ENCODE measurements at regions of chr1 and their contacts with region 1.

Region 1: GRCh38 chr1:203572134-203572625 is 54.5 kb upstream of the ATP2B4 start:
- DNase-seq: no peak
- ATAC-seq: no peak
- H3K4me3 ChIP-seq: no peak overlapping the region
- H3K4me3 Mint-ChIP-seq: no peak overlapping the region
- H3K27ac ChIP-seq: no peak overlapping the region
- H3K27ac Mint-ChIP-seq: no peak overlapping the region
- H3K4me1 ChIP-seq: no peaks in the 10 kb centered on the region
- H3K4me1 Mint-ChIP-seq: no peaks in the 10 kb centered on the region
- H3K27me3 ChIP-seq: peaks cover 0 to 31% of the 10 kb centered on the region in 2 experiments
- H3K27me3 Mint-ChIP-seq: peaks cover 2 to 4% of the 10 kb centered on the region in 2 donors

Region 2: GRCh38 chr1:203465948-203466347 is 106.2 kb before region 1 on chr1:
- CTCF ChIA-PET with region 1: no interaction called
- POLR2A ChIA-PET with region 1: no interaction called
- DNase-seq: no peak
- ATAC-seq: no peak
- H3K4me3 ChIP-seq: no peak overlapping the region
- H3K4me3 Mint-ChIP-seq: no peak overlapping the region
- H3K27ac ChIP-seq: no peak overlapping the region
- H3K27ac Mint-ChIP-seq: no peak overlapping the region
- H3K4me1 ChIP-seq: no peaks in the 10 kb centered on the region
- H3K4me1 Mint-ChIP-seq: peaks cover 0 to 6% (median 0%) of the 10 kb centered on the region in 3 donors
- H3K27me3 ChIP-seq: peaks cover 0 to 54% of the 10 kb centered on the region in 2 experiments
- H3K27me3 Mint-ChIP-seq: peaks cover 28 to 41% of the 10 kb centered on the region in 2 donors

Region 3: DNA sequence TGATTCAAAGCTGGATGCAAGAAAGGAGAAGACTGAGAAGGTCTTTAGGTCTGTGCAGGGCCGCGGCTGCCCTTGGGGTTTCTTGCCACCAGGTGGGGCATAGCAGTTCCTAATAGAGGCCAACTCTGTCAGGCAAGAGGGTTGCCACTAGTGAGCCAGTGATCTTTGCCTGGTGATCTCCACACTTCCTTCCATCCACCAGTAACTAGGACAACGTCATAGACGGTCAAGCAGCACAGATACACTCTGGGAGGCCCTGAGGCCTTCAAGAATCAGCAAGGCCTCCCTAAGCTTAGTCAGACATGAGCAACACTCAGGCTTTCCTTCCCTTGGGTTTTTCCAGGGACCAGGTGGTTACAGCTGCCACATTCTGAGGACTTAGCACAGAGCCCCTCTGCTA is 21.5 kb after region 1 on chr1:
- CTCF ChIA-PET with region 1: interaction called in 1 of 2 experiments, 12 read pairs
- POLR2A ChIA-PET with region 1: no interaction called
- DNase-seq: peak; percentile 12 to 75 (median 51)
- ATAC-seq: peak; percentile 62 to 93 (median 90)
- H3K4me3 ChIP-seq: no peak overlapping the region
- H3K4me3 Mint-ChIP-seq: no peak overlapping the region
- H3K27ac ChIP-seq: no peak overlapping the region
- H3K27ac Mint-ChIP-seq: peak overlapping the region in 1 of 2 donors; percentile 53
- H3K4me1 ChIP-seq: peaks cover 0 to 7% of the 10 kb centered on the region in 2 experiments
- H3K4me1 Mint-ChIP-seq: peaks cover 9 to 16% (median 15%) of the 10 kb centered on the region in 3 donors
- H3K27me3 ChIP-seq: peaks cover 0 to under 1% of the 10 kb centered on the region in 2 experiments
- H3K27me3 Mint-ChIP-seq: peaks cover 0 to 4% of the 10 kb centered on the region in 2 donors

Measured in T-cell (primary cell).